Heart right ventricle (tissue), 16 donors: ENCODE measurements at regions of chr2 and their contacts with region 1.

Region 1: DNA sequence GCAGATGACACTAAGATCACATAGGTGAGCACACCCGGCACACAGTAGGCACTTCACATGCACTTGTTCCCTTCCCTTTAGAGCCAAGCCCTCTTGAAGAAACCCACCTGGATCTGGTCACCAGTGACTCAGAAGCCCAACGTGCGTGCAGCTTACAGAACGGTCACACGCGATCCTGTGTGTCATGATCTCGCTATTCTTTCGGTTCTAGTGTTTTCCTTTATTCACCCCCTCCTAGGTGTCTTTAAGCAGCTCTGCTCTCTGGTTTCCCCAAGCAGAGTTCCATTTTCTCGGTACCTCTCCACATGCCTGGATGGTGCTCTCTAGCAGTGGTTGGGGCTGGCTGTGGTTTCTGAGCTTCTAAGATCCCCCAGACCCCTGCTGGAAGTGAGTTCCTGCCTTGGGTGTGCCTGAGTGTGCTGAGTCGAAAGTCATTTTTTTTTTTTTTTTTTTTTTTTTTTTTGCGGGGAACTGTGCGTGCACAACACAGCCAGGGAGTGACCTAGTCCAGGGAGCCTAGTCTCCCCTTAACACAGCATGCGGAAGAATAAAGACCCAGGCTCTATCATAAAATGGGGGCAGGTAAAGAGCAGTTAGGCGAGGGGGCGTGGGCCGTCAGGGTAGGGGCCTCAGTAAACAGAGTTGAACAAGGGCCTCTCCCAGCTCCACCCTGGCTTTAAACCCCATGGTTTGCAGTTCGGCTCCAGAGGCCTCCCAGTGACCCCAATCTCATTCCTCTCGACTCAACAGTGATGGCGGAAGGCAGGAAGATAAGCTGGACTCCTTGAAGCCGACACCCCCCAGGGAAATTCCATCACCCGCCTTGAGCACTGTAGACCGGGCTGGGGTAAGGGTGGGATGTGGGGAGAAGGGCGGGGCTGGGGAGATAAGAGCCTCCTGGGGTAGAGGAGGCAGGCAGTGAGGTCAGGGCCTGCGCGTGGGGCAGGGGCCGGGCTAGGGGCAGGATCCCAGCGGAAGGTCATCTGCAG is 29.8 kb upstream of the DNMT3A start:
- DNase-seq: no peak
- ATAC-seq: no peak
- H3K4me3 ChIP-seq: no peak overlapping the region
- H3K27ac ChIP-seq: no peak overlapping the region
- H3K4me1 ChIP-seq: peaks cover 0 to 10% (median 6%) of the 10 kb centered on the region in 9 donors
- H3K27me3 ChIP-seq: no peaks in the 10 kb centered on the region
- CTCF ChIP-seq: no peak

Region 2: DNA sequence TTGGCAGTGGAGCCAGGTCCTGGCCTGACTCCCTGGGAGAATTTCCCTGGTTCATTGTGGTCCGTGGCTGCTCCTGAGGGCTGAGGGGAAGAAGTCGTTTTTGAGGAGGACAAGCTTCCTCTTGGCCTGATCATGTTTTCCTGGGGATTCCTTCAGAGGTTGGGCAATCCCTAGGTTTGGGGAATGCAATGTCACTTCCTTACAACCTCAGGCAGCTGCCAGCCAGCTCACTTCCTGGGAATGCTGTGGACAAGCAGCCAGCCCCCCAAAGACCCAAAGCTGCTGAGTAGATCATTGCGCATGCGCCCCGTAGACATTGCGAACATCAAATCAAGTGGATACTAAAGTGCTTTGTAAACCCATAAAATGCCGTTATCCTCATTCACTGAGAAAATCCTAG is 22.1 kb before region 1 on chr2:
- intact Hi-C with region 1: loop called in 2 of 10 experiments (anchors 2 to 5 kb)
- DNase-seq: no peak
- ATAC-seq: peak in 1 of 8 donors; percentile 29
- H3K4me3 ChIP-seq: no peak overlapping the region
- H3K27ac ChIP-seq: no peak overlapping the region
- H3K4me1 ChIP-seq: peaks cover 0 to 19% (median 0%) of the 10 kb centered on the region in 9 donors
- H3K27me3 ChIP-seq: peaks cover 0 to 6% (median 0%) of the 10 kb centered on the region in 7 donors
- CTCF ChIP-seq: no peak